Activated CD4-positive, alpha-beta memory T cell treated with anti-CD3 and anti-CD28 coated beads for 36 hours (primary cell): ENCODE measurements at regions of chr2 and their contacts with region 1.

Region 1: GRCh38 chr2:207334624-207335371 is 169.1 kb upstream of the KLF7 start:
- DNase-seq: peak; percentile 77
- H3K4me3 Mint-ChIP-seq: peak overlapping the region; percentile 59
- H3K27ac Mint-ChIP-seq: peak overlapping the region; percentile 98
- H3K4me1 Mint-ChIP-seq: peaks cover 82% of the 10 kb centered on the region
- H3K27me3 Mint-ChIP-seq: no peaks in the 10 kb centered on the region

Region 2: DNA sequence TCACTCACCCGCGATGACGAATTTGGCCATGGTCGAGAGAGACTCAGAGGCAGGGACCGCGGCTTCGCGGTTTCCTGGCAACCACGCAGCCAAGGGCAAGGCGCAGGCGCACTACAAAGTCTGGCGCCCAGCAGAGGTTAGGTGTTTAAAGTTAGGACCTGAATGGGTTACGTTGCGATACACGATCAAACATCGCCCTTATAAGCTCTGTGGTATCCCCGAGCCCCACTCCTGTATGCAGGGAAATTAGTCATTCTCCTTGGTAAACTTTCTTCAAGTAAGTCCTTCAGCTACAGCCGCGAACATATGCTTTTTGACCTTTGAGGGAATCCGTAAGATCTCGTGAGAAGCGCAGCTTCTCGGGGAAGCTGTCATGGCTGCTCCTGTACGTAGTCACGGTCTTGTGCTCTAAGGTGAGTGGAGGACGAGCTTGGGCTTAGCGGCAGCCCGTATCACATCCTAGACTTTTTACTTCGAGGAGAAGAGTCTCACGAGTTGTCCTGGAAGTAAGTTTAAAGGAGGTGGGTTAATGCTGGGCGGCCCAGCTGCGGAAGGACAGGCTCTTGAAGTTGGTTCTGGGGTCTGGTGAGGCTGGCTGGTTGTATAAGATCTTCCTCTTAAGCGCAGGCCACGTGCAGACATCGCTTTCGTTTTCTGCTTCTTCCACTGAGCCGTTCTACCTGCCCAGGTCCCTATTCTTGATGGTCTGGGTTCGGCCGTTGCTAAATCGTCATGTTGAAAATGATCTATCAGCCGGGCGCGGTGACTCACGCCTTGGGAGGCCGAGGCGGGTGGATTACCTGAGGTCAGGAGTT is 569.3 kb before region 1 on chr2 and contains the starts of genes FASTKD2 and MDH1B:
- CTCF ChIA-PET with region 1: no interaction called
- POLR2A ChIA-PET with region 1: no interaction called
- intact Hi-C with region 1: loop called (anchors 1 kb)
- DNase-seq: peak; percentile 94
- H3K4me3 Mint-ChIP-seq: peak within 1 kb of the TSS; percentile 93
- H3K27ac Mint-ChIP-seq: peak within 1 kb of the TSS; percentile 96
- H3K4me1 Mint-ChIP-seq: peaks cover 31% of the 10 kb centered on the region
- H3K27me3 Mint-ChIP-seq: no peaks in the 10 kb centered on the region
- total RNA-seq, gene FASTKD2: 31.3 to 32.0 TPM
- total RNA-seq, gene MDH1B: 0.74 to 0.87 TPM

Region 3: DNA sequence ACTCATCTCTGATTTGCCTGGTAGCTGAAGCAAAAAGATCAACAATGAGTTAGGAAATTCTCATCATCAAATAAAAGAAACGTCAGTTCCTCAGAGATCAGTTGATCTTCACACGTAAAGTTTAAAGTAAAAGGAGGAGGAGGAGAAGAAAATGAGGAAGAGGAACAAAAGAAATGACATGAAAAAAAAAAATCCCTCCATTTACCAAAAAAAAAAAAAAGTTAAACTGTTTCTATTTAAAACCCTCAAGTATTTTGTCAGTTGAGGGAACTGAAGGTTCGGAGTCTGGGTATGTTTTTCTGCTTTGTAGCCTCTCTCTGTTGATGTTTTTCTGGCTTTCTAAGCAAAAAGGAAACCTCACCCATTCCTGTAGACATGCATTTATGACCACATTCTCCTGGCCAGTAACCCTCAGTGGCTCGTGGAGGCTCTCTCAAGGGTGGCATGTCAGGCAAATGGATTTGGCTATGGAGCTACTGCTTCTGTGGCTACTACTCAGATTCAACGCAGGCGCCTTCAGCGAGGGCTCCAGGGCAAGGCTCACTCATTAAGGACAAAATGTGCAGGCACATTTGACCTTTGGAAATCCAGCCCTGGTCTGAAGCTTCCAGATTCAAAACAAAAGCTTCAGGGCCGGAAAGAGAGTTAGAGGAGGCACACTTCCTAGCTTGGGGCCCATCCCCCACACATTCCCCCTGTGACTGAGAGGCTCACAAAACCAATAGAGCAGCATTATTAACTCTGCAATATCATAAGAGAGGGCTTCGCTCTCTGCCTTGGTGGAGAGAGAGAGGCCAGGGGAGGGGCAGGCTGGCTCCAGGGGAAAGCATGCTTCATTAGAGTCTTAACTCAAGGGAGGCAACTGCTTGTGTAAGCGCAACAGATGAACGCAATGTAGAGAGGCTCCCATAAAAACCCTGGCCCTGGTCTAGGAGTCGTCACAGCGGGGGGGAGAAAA is 191.3 kb before region 1 on chr2:
- CTCF ChIA-PET with region 1: interaction called, 4 read pairs
- POLR2A ChIA-PET with region 1: no interaction called
- intact Hi-C with region 1: loop called (anchors 5 kb)
- DNase-seq: peak; percentile 56
- H3K4me3 Mint-ChIP-seq: peak overlapping the region; percentile 48
- H3K27ac Mint-ChIP-seq: peak overlapping the region; percentile 79
- H3K4me1 Mint-ChIP-seq: peaks cover 71% of the 10 kb centered on the region
- H3K27me3 Mint-ChIP-seq: no peaks in the 10 kb centered on the region

Region 4: DNA sequence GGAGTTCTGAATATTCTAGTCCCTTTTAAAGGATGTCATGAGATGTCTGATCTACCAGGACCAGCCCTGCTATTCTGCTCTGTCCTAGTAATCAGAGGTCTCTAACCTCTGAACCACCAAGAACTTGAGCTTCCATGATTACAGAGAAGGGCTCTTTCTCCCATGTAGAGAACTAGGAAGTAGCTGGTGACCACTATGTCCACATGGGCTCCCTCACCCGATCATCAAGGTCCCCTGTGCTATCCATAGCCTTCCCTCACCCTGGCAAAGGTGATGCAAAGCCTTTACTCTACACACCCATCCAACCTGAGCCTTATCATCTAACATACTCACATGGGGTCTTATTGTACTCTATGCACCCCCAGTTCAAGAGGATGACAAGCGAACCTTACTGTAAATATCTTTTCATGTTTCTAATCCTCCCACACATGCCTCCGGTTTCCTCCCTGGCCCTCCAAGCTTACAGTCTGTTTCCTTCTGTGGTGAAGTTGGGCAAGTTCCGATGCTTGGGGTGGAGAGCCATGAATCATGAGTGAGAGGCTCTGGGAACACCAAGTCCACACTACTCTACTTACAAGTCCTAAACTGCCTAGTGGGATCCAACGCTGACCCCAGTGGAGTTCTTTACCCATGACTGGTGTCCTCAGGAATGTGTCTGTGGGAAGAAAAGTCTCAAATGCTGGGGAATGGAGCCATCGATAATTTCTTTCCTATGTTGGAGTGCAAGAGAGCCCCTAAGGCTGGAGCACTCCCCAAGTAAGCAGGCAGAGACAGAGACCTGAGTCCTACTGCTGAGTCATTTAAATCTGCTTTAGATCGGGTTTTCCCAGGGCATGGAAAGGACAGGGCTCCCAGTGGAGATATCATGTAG is 95.7 kb before region 1 on chr2:
- CTCF ChIA-PET with region 1: no interaction called
- POLR2A ChIA-PET with region 1: interaction called, 4 read pairs
- intact Hi-C with region 1: loop called (anchors 1 kb)
- DNase-seq: peak; percentile 69
- H3K4me3 Mint-ChIP-seq: no peak overlapping the region
- H3K27ac Mint-ChIP-seq: no peak overlapping the region
- H3K4me1 Mint-ChIP-seq: peaks cover 25% of the 10 kb centered on the region
- H3K27me3 Mint-ChIP-seq: peaks cover 1% of the 10 kb centered on the region

Region 5: GRCh38 chr2:207311316-207312005 is 23.3 kb before region 1 on chr2:
- CTCF ChIA-PET with region 1: no interaction called
- POLR2A ChIA-PET with region 1: interaction called, 3 read pairs
- intact Hi-C with region 1: loop called (anchors 1 kb)
- DNase-seq: peak; percentile 76
- H3K4me3 Mint-ChIP-seq: peak overlapping the region; percentile 3
- H3K27ac Mint-ChIP-seq: peak overlapping the region; percentile 79
- H3K4me1 Mint-ChIP-seq: peaks cover 28% of the 10 kb centered on the region
- H3K27me3 Mint-ChIP-seq: no peaks in the 10 kb centered on the region

Region 6: DNA sequence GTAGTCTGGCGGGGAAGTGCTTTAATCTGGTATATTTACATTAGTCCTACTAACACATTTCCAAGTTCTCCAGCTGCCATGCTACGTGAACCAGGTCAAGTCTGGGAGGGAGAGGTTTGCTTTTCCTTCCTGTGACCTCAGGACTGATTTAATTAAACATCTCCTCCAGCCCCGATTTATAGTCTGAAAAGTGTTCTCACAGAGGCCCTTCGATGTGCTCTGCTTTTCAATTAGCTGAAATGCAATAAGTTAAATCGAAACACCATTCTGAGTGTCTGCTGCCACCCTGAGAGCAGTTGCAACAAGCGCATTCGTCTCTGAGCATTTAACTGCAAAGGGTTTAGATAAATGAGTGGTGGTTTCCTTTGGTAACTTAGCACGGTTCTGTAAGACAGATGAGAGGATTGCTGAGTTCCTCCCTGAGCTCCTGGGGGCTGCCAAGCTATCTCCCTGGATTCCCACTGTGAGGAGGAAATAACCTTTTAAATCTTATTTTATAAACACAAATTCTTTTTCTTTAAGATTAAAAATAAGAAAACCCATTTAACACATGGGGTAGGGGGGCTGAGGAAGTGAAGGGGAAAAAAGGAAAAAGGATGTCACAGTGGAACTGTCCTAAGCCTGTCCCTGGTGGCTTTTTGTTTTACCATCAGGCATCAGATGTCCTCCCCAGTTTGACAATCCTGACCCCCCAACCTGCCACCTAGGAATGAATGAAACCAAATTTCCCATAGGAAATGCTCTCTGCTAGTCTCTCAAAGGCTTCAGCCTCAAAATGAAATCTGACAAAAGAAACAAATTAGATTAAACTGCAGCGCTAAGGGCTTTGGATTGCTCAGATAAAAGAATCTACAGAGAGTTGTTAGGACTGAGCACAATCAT is 138.5 kb after region 1 on chr2:
- CTCF ChIA-PET with region 1: interaction called, 8 read pairs
- POLR2A ChIA-PET with region 1: no interaction called
- intact Hi-C with region 1: loop called (anchors 2 kb)
- DNase-seq: peak; percentile 71
- H3K4me3 Mint-ChIP-seq: no peak overlapping the region
- H3K27ac Mint-ChIP-seq: peak overlapping the region; percentile 32
- H3K4me1 Mint-ChIP-seq: peaks cover 22% of the 10 kb centered on the region
- H3K27me3 Mint-ChIP-seq: no peaks in the 10 kb centered on the region

Region 7: GRCh38 chr2:207625018-207625907 is 290.5 kb after region 1 on chr2 and contains the start of gene METTL21A:
- CTCF ChIA-PET with region 1: no interaction called
- POLR2A ChIA-PET with region 1: no interaction called
- intact Hi-C with region 1: loop called (anchors 10 kb)
- DNase-seq: peak; percentile 96
- H3K4me3 Mint-ChIP-seq: peak within 1 kb of the TSS; percentile 87
- H3K27ac Mint-ChIP-seq: peak within 1 kb of the TSS; percentile 96
- H3K4me1 Mint-ChIP-seq: peaks cover 48% of the 10 kb centered on the region
- H3K27me3 Mint-ChIP-seq: no peaks in the 10 kb centered on the region
- total RNA-seq, gene METTL21A: 21.2 to 22.9 TPM